Activated CD8-positive, alpha-beta T cell treated with anti-CD3 and anti-CD28 coated beads for 36 hours (primary cell): ENCODE measurements at regions of chr7 and their contacts with region 1.

Region 1: GRCh38 chr7:130951303-130951975 is 217.4 kb upstream of the KLF14 start:
- DNase-seq: no peak
- ATAC-seq: peak; percentile 9
- H3K4me3 Mint-ChIP-seq: no peak overlapping the region
- H3K27ac Mint-ChIP-seq: no peak overlapping the region
- H3K4me1 Mint-ChIP-seq: peaks cover 61% of the 10 kb centered on the region
- H3K27me3 Mint-ChIP-seq: no peaks in the 10 kb centered on the region
- CTCF ChIP-seq: no peak

Region 2: DNA sequence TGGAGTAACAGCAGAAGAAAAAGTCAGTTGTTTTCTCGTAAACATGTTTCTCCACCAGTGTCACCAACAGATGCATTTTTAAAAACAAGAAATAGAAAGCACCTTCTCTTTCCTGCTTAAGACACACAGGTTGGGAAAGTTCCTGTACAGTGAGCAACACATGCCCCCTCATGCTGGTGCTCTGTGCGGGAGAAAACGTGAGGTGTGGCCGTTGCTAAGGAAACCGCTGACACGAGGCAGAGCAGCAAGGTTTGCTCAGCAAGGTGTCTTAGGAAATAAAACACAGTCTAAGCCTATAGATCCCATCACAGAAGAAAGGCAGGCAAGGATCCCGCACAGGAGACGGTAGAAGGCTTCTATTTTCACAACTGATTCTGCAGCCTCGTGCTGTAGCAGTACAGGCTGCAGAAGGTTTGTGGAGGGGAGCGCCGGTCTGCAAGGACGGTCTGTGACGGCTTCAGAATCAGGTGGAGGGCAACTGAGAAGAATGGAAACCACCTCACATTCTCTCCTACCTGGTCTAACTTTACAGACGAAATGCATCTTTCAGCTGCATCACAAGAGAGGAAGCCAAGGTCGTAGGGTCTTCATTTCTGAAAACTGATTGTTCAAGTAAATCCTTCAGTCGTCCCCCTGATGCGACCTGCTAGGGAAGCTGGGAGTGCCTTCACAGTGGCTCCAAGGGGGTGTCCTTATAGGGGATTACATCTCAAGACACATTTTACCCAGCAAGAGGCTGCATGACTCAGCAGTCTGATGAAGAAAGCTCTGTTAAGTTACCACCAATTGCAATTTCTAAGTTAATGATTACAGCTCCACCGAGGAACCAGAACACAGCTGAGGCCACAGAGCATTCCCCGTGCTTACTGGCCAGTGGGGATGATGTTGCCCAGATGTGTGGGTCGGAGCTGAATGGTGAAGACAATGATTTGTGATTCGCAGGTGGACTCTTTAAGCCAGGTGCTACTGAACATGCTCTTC is 66.7 kb before region 1 on chr7:
- CTCF ChIA-PET with region 1: no interaction called
- POLR2A ChIA-PET with region 1: no interaction called
- intact Hi-C with region 1: no loop called
- DNase-seq: no peak
- ATAC-seq: no peak
- H3K4me3 Mint-ChIP-seq: no peak overlapping the region
- H3K27ac Mint-ChIP-seq: peak overlapping the region; percentile 75
- H3K4me1 Mint-ChIP-seq: peaks cover 56% of the 10 kb centered on the region
- H3K27me3 Mint-ChIP-seq: no peaks in the 10 kb centered on the region
- CTCF ChIP-seq: no peak

Region 3: DNA sequence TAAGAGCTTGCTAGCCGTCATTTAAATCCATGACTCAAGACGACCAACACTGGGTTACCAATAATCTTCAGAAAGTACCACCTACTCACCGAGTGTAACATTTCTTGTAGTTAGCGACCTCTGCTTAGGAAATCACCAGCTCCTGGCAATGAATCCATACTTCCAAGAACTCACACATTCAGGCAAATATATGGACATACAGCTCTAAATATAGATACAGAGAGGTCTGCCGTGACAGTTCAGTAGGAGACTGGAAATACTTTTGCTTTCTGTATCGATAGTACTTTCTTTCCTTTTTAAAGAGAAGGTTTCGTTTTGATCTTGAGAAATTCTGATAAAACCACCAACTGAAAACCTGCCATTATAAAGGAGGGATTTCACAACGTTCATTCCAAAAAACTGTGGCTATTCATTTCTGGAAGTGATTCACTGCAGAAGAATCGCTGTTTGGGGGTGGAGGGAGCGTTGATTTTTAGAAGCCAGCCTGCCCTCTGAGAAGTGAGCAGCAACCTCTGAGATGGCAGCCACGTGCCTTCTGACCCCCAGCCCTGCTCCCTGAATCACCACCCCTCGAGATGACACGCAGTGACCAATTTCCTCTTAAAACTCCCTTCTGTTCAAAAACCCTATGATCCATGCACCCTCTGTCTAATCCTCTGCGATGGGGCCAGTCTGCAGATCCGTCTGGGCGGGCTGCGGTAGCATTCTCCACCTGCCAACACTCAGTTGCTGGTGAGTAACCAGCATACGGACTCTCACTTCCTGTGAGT is 38.4 kb before region 1 on chr7:
- CTCF ChIA-PET with region 1: interaction called, 3 read pairs
- POLR2A ChIA-PET with region 1: no interaction called
- intact Hi-C with region 1: loop called (anchors 2 kb)
- DNase-seq: peak; percentile 93
- ATAC-seq: peak; percentile 79
- H3K4me3 Mint-ChIP-seq: peak overlapping the region; percentile 87
- H3K27ac Mint-ChIP-seq: peak overlapping the region; percentile 97
- H3K4me1 Mint-ChIP-seq: peaks cover 85% of the 10 kb centered on the region
- H3K27me3 Mint-ChIP-seq: no peaks in the 10 kb centered on the region
- CTCF ChIP-seq: no peak